Activated T-helper 1 cell treated with anti-CD3 and anti-CD28 coated beads, Interleukin-12 subunit alpha, Interleukin-12 subunit beta, Interleukin-2, Interleukin-4 antibody, amounts not matched to agents 30 ng/mL and 10 ng/mL and 1 ng/mL, durations not matched to agents 14 hours and 24 hours and 36 hours (primary cell): ENCODE measurements at regions of chr12 and their contacts with region 1.

Region 1: DNA sequence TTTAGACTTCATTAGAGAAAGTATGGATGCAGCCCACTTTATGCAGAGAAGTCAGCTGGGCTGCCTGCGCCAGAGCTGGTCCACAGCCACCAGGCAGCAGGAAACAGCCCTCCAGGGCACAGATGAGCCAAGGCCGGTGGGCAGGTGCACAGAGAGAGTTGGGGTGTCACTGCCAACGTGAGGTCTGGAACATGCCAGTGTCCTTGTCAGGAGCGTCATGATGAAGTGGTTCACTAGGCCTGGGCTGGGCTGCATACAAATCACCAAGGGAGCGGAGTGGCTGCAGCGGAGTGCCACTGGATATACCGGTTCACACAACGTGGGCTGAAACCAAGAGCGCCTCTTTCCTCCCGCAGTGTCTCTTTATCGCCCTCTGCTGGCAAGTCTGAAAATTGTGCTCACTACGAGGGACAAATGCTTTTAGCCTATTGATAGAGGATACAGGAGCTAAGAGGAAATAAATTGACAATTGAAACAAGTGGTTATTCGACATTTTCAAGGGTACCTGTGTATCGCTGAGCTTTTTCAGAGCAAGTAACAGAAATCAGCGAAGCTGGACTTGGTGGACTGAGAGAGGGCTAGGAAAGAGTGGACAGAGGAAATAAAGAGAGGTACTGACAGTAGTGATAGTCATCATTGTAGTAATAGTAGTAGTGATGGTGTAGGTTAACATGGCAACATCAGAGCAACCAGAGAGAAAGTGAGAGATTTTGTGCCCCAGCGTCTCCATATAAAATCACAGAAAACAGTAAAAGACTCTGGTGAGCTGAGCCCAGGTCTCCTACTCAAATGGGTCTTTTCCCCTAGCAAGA is 52.0 kb upstream of the ITPR2 start:
- DNase-seq: peak; percentile 78
- H3K4me3 Mint-ChIP-seq: peak overlapping the region; percentile 23
- H3K27ac Mint-ChIP-seq: no peak overlapping the region
- H3K4me1 Mint-ChIP-seq: peaks cover 8% of the 10 kb centered on the region
- H3K27me3 Mint-ChIP-seq: peaks cover 16% of the 10 kb centered on the region

Region 2: DNA sequence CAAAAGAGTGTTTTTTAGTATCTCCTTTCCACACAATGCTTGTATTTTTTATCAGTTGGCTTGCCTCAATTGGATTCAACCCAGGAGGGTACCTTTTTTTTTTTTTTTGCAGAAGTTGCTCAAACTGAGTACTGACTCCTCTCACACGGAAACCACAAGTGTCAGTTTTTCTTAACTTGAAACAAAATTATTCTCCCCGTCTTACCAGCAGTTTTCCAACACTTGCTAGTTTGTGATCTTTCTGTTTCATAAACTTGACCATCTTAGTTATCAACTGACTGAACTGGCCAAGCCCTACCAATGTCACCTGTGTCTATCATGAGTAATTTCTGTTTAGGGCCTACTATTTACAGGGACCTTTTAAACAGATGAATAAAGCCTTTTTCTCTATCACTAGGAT is 17.9 kb before region 1 on chr12:
- intact Hi-C with region 1: loop called (anchors 2 kb)
- DNase-seq: no peak
- H3K4me3 Mint-ChIP-seq: no peak overlapping the region
- H3K27ac Mint-ChIP-seq: no peak overlapping the region
- H3K4me1 Mint-ChIP-seq: peaks cover 24% of the 10 kb centered on the region
- H3K27me3 Mint-ChIP-seq: peaks cover 2% of the 10 kb centered on the region